Heart left ventricle (tissue), 16 donors: ENCODE measurements at regions of chr14 and their contacts with region 1.

Region 1: GRCh38 chr14:23320774-23321571 is at the start of gene PABPN1:
- DNase-seq: peak; percentile 98 to 99 (median 99)
- ATAC-seq: peak; percentile 92 to 97 (median 96)
- H3K4me3 ChIP-seq: peak within 1 kb of the TSS; percentile 84 to 99 (median 92)
- H3K27ac ChIP-seq: peak within 1 kb of the TSS; percentile 89 to 98 (median 97)
- H3K4me1 ChIP-seq: peaks cover 4 to 26% (median 15%) of the 10 kb centered on the region in 12 donors
- H3K27me3 ChIP-seq: no peaks in the 10 kb centered on the region
- CTCF ChIP-seq: no peak
- POLR2A ChIP-seq: peak in 1 of 2 donors; percentile 53
- total RNA-seq, gene PABPN1: 23.7 to 85.1 (median 62.5) TPM

Region 2: GRCh38 chr14:22929104-22929847 is 391.7 kb before region 1 on chr14 and contains the start of gene PRMT5:
- intact Hi-C with region 1: no loop called
- DNase-seq: peak; percentile 98 to 100 (median 99)
- ATAC-seq: peak; percentile 97 to 99 (median 98)
- H3K4me3 ChIP-seq: peak within 1 kb of the TSS; percentile 74 to 97 (median 84)
- H3K27ac ChIP-seq: peak within 1 kb of the TSS; percentile 51 to 94 (median 83)
- H3K4me1 ChIP-seq: peaks cover 0 to 22% (median 13%) of the 10 kb centered on the region in 12 donors
- H3K27me3 ChIP-seq: no peaks in the 10 kb centered on the region
- CTCF ChIP-seq: no peak
- POLR2A ChIP-seq: peak in 1 of 2 donors; percentile 78
- total RNA-seq, gene PRMT5: 37.2 to 60.2 (median 48.8) TPM

Region 3: GRCh38 chr14:23259426-23259825 is 61.5 kb before region 1 on chr14:
- intact Hi-C with region 1: no loop called
- DNase-seq: no peak
- ATAC-seq: no peak
- H3K4me3 ChIP-seq: no peak overlapping the region
- H3K27ac ChIP-seq: no peak overlapping the region
- H3K4me1 ChIP-seq: no peaks in the 10 kb centered on the region
- H3K27me3 ChIP-seq: peaks cover 0 to 18% (median 4%) of the 10 kb centered on the region in 9 donors
- CTCF ChIP-seq: no peak
- POLR2A ChIP-seq: no peak

Region 4: DNA sequence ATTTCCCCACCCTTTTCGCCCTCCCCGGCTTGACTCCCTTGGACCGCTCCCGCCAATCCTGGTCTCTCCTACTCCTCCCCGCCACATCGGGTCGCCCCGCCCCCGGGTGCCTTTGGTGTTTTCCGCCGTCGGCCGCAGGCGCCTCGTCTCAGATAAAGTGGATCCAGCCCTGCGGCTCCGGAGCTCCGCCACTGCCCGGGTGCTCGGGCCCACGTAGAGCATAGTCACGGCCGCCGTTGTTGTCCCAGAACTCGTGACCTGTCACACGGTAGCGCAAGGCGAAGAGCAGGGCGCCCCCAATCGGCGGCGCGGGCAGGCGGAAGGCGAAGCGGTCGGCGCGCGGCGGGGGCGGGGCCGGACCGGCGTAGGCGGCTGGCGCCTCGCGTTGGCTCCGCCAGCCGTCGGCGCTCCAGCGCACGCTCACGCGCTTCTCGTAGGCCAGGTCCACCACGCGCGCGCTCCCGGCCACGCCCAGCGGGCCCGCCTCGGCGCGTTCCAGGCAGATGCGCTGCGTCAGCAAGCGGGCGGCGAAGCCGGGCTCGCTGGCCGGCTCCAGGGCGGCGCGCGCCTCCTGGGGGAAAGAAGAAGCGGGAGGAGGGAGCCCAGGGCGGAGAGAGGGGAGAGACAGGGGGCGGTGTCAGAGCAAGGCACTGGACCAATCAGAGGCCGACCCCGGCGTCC is 19.5 kb before region 1 on chr14:
- intact Hi-C with region 1: loop called in 2 of 10 experiments (anchors 1 to 2 kb)
- DNase-seq: peak; percentile 98 to 99 (median 99)
- ATAC-seq: peak; percentile 76 to 90 (median 85)
- H3K4me3 ChIP-seq: peak overlapping the region; percentile 77 to 95 (median 82)
- H3K27ac ChIP-seq: peak overlapping the region; percentile 94 to 100 (median 98)
- H3K4me1 ChIP-seq: peaks cover 0 to 61% (median 33%) of the 10 kb centered on the region in 12 donors
- H3K27me3 ChIP-seq: no peaks in the 10 kb centered on the region
- CTCF ChIP-seq: peak; percentile 53 to 98 (median 73)
- POLR2A ChIP-seq: no peak

Region 5: DNA sequence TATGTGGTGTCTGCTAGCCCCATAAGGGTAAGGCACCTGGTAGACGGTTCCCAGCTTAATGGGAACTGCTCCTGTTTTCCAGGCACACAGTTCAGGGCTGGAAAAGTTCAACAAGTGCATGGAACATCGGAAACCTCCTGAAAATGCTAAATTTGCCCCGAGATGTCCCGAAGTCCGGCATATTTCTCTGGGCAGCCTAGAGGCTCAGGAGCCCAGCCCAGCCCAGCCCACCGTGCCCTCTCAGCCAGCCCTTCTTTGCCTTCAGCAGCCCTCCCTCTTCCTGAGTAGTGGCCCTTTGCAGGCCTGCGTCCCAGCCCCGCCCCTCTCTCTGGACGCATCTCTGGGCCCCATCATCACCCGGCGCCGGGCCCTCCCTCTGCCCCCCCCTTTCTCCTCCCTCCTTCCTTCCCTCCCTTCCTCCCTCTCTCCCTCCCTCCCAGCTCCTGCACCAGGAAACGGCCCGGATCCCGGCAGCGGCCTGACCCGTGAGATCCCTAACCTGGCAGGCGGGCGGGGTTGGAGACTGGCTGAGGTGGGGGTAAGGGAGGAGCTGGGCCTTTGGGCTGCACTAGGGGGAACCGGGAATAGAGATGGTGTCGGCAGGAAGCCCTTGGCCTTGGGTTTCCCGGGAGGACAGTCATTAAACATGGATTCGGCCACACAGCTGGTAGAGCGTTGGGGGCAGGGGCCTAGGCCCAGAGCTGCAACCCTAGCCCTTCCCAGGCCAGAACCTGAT is 14.4 kb before region 1 on chr14 and contains the start of gene BCL2L2:
- intact Hi-C with region 1: loop called in 2 of 10 experiments (anchors 1 to 2 kb)
- DNase-seq: peak; percentile 93 to 96 (median 93)
- ATAC-seq: peak; percentile 73 to 88 (median 80)
- H3K4me3 ChIP-seq: peak within 1 kb of the TSS; percentile 60 to 96 (median 76)
- H3K27ac ChIP-seq: peak within 1 kb of the TSS; percentile 60 to 94 (median 90)
- H3K4me1 ChIP-seq: peaks cover 0 to 53% (median 32%) of the 10 kb centered on the region in 12 donors
- H3K27me3 ChIP-seq: no peaks in the 10 kb centered on the region
- CTCF ChIP-seq: no peak
- POLR2A ChIP-seq: peak in 1 of 2 donors; percentile 72
- total RNA-seq, gene BCL2L2: 30.0 to 40.3 (median 36.7) TPM

Region 6: GRCh38 chr14:23454445-23454856 is 133.5 kb after region 1 on chr14:
- intact Hi-C with region 1: loop called in 6 of 10 experiments (anchors 5 to 10 kb)
- DNase-seq: no peak
- ATAC-seq: peak in 2 of 4 donors; percentile 21 to 55
- H3K4me3 ChIP-seq: no peak overlapping the region
- H3K27ac ChIP-seq: peak overlapping the region in 1 of 12 donors; percentile 13
- H3K4me1 ChIP-seq: peaks cover 0 to 6% (median 0%) of the 10 kb centered on the region in 12 donors
- H3K27me3 ChIP-seq: peaks cover 0 to 21% (median 0%) of the 10 kb centered on the region in 9 donors
- CTCF ChIP-seq: no peak
- POLR2A ChIP-seq: no peak

Region 7: DNA sequence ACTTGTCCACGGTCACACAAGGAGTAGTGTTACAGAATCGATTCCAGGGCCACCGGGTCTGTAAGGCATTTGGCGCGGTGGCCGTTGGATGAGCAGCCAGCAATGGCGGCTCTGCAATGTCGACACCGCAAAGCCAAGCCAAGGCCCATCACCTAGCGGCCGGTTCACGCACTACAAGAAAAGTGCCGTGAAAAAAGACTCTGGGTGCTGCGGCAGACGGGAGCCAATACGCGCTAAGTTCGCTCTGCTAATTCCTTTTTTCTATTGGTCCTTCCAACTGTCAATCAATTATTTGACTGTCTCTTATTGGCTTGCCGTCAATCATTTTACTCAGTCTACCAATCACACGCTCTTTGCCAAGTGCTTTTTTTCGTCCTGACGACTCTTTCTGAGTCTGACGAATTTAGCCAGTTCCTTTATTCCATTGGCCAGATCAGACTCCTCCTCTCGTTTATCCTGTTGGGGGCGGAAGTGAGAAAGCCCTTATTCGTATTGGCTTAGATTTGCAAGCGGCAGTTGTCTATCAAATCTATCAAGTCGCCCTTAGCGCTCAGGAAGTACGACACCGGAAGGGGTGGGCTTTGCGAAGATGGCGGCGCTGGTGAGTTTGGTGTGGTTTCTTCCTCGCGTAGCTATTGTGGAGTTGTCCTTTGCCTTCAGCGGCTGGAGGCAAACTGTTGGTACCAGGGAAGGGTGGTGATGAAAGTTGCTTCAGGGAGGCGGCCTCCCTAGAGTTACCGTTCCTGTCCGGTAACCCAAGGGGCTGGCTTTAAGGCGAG is 148.3 kb after region 1 on chr14 and contains the start of gene NGDN:
- intact Hi-C with region 1: loop called in 5 of 10 experiments (anchors 1 to 5 kb)
- DNase-seq: peak; percentile 94 to 96 (median 95)
- ATAC-seq: peak; percentile 95 to 97 (median 96)
- H3K4me3 ChIP-seq: peak within 1 kb of the TSS; percentile 71 to 99 (median 84)
- H3K27ac ChIP-seq: peak within 1 kb of the TSS; percentile 51 to 90 (median 80)
- H3K4me1 ChIP-seq: peaks cover 0 to 15% (median 7%) of the 10 kb centered on the region in 12 donors
- H3K27me3 ChIP-seq: no peaks in the 10 kb centered on the region
- CTCF ChIP-seq: peak; percentile 73 to 96 (median 90)
- POLR2A ChIP-seq: peak in 1 of 2 donors; percentile 46
- total RNA-seq, gene NGDN: 16.5 to 23.4 (median 18.7) TPM

Region 8: DNA sequence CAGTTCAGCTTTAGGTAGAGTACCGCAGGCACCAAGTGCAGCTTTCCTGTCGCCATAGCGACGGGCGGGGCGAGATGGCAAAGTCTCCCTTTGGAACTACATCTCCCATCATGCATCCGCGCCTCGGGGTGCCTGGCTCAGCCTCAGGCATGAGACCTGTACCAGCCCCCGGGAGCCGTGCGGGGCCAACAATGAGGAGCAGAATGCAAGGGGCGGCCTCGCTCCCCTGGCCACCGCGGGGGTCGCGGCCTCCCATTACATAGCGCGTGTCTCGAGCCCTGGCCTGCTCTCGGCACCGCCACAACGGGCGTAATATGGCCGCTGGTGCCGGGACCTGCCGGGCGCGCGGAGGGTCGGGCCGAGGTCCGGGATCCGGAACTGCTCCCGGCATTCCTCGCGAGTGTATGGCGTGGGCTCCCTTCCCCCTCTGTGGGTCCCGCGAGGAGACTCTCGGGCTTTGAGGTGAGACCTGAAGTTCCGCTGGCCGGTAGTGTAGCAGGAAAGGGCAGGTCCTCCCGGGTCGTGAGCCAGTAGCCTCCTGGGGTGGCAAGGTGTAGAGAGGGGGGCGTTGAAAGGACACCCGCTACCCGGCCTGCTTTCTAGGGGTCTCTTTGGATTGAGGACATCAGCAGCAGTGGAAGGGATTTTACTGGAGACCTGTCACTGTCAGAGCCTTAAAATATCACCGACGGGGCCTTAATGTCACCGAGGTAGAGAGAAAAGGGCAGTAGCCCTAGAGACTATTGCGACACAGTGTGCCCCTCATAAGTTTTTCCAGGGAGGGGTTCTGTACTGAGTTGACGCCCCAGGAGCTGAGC is 235.1 kb after region 1 on chr14 and contains the start of gene THTPA:
- intact Hi-C with region 1: loop called in 7 of 10 experiments (anchors 5 to 10 kb)
- DNase-seq: peak; percentile 93 to 97 (median 95)
- ATAC-seq: peak; percentile 86 to 96 (median 94)
- H3K4me3 ChIP-seq: peak within 1 kb of the TSS; percentile 56 to 100 (median 92)
- H3K27ac ChIP-seq: peak within 1 kb of the TSS; percentile 90 to 100 (median 97)
- H3K4me1 ChIP-seq: peaks cover 0 to 35% (median 21%) of the 10 kb centered on the region in 12 donors
- H3K27me3 ChIP-seq: no peaks in the 10 kb centered on the region
- CTCF ChIP-seq: no peak
- POLR2A ChIP-seq: peak in 1 of 2 donors; percentile 52
- total RNA-seq, gene THTPA: 13.0 to 30.9 (median 18.9) TPM

Region 9: GRCh38 chr14:23567192-23568020 is 246.4 kb after region 1 on chr14 and contains the start of gene AP1G2:
- intact Hi-C with region 1: loop called in 6 of 10 experiments (anchors 5 to 10 kb)
- DNase-seq: peak; percentile 84 to 92 (median 88)
- ATAC-seq: peak; percentile 55 to 82 (median 72)
- H3K4me3 ChIP-seq: peak within 1 kb of the TSS; percentile 19 to 80 (median 66)
- H3K27ac ChIP-seq: peak within 1 kb of the TSS in 11 of 12 donors; percentile 38 to 77 (median 64)
- H3K4me1 ChIP-seq: peaks cover 0 to 40% (median 10%) of the 10 kb centered on the region in 12 donors
- H3K27me3 ChIP-seq: peaks cover 0 to 11% (median 0%) of the 10 kb centered on the region in 9 donors
- CTCF ChIP-seq: no peak
- POLR2A ChIP-seq: peak in 1 of 2 donors; percentile 39
- total RNA-seq, gene AP1G2: 7.2 to 33.8 (median 11.6) TPM